Activated CD4-positive, alpha-beta T cell treated with anti-CD3 and anti-CD28 coated beads for 36 hours (primary cell): ENCODE measurements at regions of chr1 and their contacts with region 1.

Region 1: GRCh38 chr1:246383791-246384190 is 123.3 kb downstream of the SMYD3 start:
- DNase-seq: no peak
- ATAC-seq: no peak
- H3K4me3 Mint-ChIP-seq: no peak overlapping the region
- H3K27ac Mint-ChIP-seq: no peak overlapping the region
- H3K4me1 Mint-ChIP-seq: peaks cover 14% of the 10 kb centered on the region
- H3K27me3 Mint-ChIP-seq: no peaks in the 10 kb centered on the region

Region 2: GRCh38 chr1:246364415-246364941 is 19.3 kb before region 1 on chr1:
- CTCF ChIA-PET with region 1: no interaction called
- POLR2A ChIA-PET with region 1: no interaction called
- intact Hi-C with region 1: no loop called
- DNase-seq: peak; percentile 26
- ATAC-seq: peak; percentile 84
- H3K4me3 Mint-ChIP-seq: peak overlapping the region; percentile 23
- H3K27ac Mint-ChIP-seq: peak overlapping the region; percentile 31
- H3K4me1 Mint-ChIP-seq: peaks cover 20% of the 10 kb centered on the region
- H3K27me3 Mint-ChIP-seq: no peaks in the 10 kb centered on the region

Region 3: GRCh38 chr1:246428542-246429308 is 44.9 kb after region 1 on chr1:
- CTCF ChIA-PET with region 1: no interaction called
- POLR2A ChIA-PET with region 1: no interaction called
- intact Hi-C with region 1: loop called in 1 of 2 experiments (anchors 5 kb)
- DNase-seq: peak; percentile 69
- ATAC-seq: peak; percentile 95
- H3K4me3 Mint-ChIP-seq: no peak overlapping the region
- H3K27ac Mint-ChIP-seq: no peak overlapping the region
- H3K4me1 Mint-ChIP-seq: peaks cover 4% of the 10 kb centered on the region
- H3K27me3 Mint-ChIP-seq: no peaks in the 10 kb centered on the region